ENCODE measurements at regions of chr15 and their contacts with region 1.

Region 1: GRCh38 chr15:75367913-75368688 is at the start of gene MAN2C1:
- H3K4me3 ChIP-seq: peak within 1 kb of the TSS; percentile 88
- H3K27ac ChIP-seq: peak within 1 kb of the TSS; percentile 81
- H3K4me1 ChIP-seq: peaks cover 8% of the 10 kb centered on the region
- CTCF ChIP-seq: peak; percentile 100

Region 2: DNA sequence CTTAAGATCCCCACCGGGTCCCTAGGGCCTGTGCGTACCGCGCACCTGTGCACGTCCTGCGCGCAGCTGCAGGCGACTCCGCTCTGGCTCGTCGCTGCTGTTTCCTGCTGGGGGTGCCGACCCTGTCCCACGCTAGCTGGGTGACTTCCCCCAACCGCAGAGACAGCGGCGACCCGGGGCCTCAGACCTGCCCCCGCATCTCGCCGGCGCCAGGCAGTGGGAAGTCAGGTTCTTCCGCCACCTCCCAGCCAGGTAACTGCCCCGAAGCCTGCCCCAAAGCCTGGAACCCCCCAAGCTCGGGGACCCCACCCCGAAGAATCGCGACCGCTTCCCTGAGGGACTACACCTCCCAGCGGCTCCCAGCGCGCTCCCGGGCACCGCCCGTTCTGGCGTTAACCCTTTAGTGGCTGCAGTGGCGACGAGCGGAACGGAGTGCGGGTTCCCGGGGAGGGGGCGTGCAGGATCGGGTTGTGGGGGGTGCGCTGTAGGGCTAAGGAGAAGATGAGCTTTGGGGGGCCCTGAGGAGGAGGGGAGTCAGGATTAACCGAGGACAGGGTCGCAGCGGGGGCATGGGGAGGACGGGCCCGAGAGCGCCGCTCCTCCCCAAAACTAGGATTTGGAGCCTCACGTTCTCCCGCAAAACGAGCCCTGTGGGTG is 20.8 kb before region 1 on chr15:
- CTCF ChIA-PET with region 1: interaction called, 40 read pairs
- POLR2A ChIA-PET with region 1: interaction called, 55 read pairs
- H3K4me3 ChIP-seq: peak overlapping the region; percentile 62
- H3K27ac ChIP-seq: peak overlapping the region; percentile 88
- H3K4me1 ChIP-seq: peaks cover 6% of the 10 kb centered on the region; the same call in 1 of the 2 replicates
- CTCF ChIP-seq: peak; percentile 84

Region 3: DNA sequence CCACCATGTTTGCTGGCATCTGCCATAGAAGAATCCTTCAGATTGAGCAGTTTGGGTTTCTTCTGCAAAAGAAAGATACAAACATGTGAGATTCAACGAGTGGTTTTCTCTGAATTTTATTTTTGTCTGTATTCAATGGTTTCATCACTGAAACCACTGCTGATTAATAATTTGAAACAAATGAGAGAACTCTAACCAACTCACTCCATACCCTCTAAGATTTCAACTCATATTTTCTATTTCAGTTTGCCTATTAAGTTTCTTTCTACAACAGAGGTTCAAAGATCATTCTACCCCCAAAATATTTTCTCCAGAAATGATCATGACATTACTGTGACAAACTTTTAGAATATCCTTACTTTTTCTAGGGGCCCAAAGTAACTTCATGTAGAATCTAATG is 39.0 kb after region 1 on chr15:
- CTCF ChIA-PET with region 1: interaction called, 13 read pairs
- POLR2A ChIA-PET with region 1: no interaction called
- H3K4me3 ChIP-seq: no peak overlapping the region
- H3K27ac ChIP-seq: peak overlapping the region; percentile 5; the same call in 1 of the 2 replicates
- H3K4me1 ChIP-seq: no peaks in the 10 kb centered on the region
- CTCF ChIP-seq: no peak

Region 4: DNA sequence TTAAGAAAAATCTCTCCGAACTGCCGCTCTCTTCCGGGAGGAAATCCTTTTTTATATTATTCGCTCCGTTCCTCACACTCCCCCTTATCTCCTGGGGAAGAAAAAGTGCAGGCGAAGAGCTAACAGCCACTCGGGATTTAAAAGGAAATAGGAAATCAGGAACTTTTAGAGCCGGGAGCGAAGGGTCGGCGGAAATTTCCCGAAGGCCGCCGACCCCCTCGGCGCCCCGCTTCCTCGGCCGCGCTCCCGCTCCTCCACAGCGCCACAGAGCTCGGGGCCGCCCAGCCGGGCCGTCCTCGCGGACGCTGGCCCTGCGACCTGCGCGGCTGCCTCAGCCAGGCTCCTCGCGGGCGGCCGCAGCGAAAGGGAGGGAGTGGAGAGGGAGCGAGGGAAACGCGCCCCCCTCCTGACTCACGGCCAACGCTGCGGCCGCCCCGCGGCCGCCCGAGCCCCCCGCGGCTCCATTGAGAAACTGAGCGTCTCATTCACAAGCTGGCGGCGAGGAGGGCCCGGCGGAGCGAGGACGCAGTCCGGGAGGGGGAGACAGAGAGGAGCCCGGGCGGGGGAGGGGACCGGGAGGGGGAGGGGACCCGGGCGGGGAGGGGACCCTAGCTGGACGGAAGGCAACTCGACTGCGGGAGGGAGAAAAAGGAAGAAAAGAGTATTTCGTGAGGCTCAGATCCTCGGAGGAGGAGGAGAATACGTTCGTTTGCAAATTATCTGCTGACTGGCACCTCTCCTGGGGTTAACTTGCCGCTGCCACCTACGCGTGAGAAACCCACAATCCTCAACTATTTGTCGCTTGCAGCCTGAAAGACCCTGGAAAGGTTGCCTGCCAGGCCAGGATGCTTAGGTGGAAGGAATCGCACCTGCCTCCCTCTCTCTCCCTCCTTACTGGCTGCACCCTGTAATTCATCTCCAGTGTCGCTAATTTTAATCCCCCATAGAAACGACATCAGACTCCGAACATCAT is 211.1 kb after region 1 on chr15 and contains the start of gene PTPN9:
- CTCF ChIA-PET with region 1: interaction called, 3 read pairs
- POLR2A ChIA-PET with region 1: interaction called, 16 read pairs
- H3K4me3 ChIP-seq: peak within 1 kb of the TSS; percentile 84
- H3K27ac ChIP-seq: peak within 1 kb of the TSS; percentile 96
- H3K4me1 ChIP-seq: peaks cover 14% of the 10 kb centered on the region
- CTCF ChIP-seq: peak; percentile 79

Region 5: DNA sequence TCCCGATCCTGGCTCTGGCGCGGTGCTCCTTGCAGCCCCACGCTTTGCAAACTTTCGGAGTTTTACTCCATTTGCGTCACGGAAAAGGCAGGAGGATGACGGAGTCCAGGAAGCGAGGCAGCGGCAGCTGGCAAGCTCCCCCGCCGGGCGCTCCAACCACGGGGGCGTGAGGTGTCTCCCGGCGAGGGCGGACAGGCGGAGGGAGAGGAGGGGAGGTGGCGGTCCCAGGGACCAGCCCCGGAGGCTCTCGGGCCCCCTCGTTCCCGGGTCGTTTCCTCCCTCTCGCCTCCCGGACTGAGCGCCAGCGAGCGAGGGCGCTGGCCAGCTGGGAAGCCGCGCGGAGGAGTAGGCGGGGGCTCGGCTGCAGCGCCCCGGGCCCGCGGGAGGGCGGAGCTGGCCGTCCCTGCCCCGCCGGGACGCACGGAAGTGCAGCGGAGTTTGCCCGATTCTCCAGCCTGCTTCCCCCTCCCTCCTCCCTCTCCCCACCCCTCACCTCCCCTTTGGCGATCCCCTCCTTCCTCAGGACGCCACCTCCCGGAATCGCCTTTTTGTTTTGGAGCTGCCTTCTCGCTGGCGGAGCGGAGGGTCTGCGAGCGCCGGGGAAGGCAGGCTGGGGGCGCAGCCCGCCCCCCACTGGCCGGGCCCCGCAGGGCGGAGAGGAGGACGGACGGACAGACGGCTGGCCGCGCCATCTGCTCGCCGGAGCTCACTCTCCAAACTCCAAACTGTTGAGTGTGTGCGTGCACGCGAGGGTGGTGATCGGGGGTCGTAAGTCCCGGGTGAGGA is 279.5 kb after region 1 on chr15 and contains the start of gene SNX33:
- CTCF ChIA-PET with region 1: interaction called, 22 read pairs
- POLR2A ChIA-PET with region 1: interaction called, 21 read pairs
- H3K4me3 ChIP-seq: peak within 1 kb of the TSS; percentile 73
- H3K27ac ChIP-seq: peak within 1 kb of the TSS; percentile 74; the same call in 1 of the 2 replicates
- H3K4me1 ChIP-seq: no peaks in the 10 kb centered on the region
- CTCF ChIP-seq: peak; percentile 99

Region 6: GRCh38 chr15:75801859-75802593 is 433.9 kb after region 1 on chr15:
- CTCF ChIA-PET with region 1: interaction called, 14 read pairs
- POLR2A ChIA-PET with region 1: no interaction called
- H3K4me3 ChIP-seq: no peak overlapping the region
- H3K27ac ChIP-seq: no peak overlapping the region
- H3K4me1 ChIP-seq: no peaks in the 10 kb centered on the region
- CTCF ChIP-seq: peak; percentile 92

Measured in HEK293 (cell line).